Activated T-helper 1 cell treated with anti-CD3 and anti-CD28 coated beads, Interleukin-12 subunit alpha, Interleukin-12 subunit beta, Interleukin-2, Interleukin-4 antibody, amounts not matched to agents 30 ng/mL and 10 ng/mL and 1 ng/mL, durations not matched to agents 14 hours and 24 hours and 36 hours (primary cell): ENCODE measurements at regions of chr9 and their contacts with region 1.

Region 1: DNA sequence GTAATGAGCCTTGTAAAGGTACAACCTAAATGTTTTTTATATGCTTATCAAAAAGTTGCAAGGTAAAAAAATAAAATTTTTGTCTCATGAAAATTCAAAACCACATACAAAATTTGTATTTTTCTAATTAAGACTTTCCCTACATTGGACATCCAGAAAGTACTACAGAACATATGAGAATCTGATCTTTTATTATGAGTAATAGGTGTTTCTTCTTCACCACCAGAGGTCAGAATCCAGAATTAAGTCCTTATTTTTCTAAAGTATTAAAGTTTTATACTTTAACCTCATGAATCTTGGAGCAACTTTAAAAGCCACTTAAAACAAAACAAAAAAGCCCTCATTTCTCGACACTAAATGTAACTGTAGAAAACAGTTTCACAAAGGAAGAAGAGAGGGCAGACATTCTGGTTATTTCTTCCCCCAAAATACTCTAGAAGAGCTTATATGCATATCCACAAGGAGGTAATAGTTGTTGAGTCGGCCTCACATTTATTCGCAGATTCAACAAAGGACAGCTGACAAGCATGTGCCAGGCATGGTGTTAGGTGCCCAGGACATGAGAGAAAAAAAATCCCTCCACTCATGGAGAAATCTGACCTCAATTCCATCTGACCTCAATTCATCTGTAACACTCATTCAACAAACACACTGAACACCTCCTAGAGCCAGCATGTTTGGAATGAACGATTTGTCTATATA is 69.3 kb downstream of the MLLT3 start:
- DNase-seq: peak; percentile 1
- H3K4me3 Mint-ChIP-seq: peak overlapping the region; percentile 59
- H3K27ac Mint-ChIP-seq: peak overlapping the region; percentile 64
- H3K4me1 Mint-ChIP-seq: peaks cover 76% of the 10 kb centered on the region
- H3K27me3 Mint-ChIP-seq: no peaks in the 10 kb centered on the region

Region 2: DNA sequence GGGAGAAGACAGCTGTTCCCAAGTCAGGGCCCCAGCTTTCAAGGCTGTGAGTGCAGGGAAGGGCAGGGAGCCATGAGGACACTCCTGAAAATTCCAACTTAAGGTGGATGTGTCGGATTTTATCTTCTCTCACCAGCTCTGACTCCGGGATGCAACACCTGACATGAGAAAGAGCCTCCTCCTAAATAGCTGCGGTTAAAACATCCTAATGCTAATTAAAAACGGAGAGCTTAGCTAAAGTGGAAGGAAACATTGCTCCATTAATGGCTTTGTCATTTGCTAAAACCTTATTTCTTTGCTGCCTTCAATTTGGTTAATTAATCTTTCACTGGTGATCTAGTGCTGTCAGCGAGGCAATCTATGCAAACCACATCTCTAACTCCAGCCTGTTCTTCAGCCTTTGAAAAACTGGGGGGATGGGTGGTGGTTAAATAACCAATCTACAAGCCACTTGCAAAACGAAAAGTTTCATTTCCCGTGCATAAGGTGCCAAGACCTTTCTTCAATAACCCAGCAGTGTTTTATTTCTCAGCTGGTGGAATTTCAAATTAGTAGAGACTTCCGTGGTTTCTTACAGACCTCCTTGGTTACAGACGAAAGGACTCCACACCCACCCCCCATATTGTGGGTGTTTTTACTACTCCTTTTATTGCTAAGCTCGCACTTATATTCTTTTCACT is 310.4 kb before region 1 on chr9:
- intact Hi-C with region 1: loop called (anchors 5 kb)
- DNase-seq: peak; percentile 36
- H3K4me3 Mint-ChIP-seq: peak overlapping the region; percentile 36
- H3K27ac Mint-ChIP-seq: peak overlapping the region; percentile 27
- H3K4me1 Mint-ChIP-seq: peaks cover 65% of the 10 kb centered on the region
- H3K27me3 Mint-ChIP-seq: peaks cover 2% of the 10 kb centered on the region

Region 3: GRCh38 chr9:20508242-20508641 is 44.8 kb before region 1 on chr9:
- intact Hi-C with region 1: loop called (anchors 1 kb)
- DNase-seq: peak; percentile 30
- H3K4me3 Mint-ChIP-seq: peak overlapping the region; percentile 13
- H3K27ac Mint-ChIP-seq: peak overlapping the region; percentile 5
- H3K4me1 Mint-ChIP-seq: peaks cover 77% of the 10 kb centered on the region
- H3K27me3 Mint-ChIP-seq: no peaks in the 10 kb centered on the region

Region 4: DNA sequence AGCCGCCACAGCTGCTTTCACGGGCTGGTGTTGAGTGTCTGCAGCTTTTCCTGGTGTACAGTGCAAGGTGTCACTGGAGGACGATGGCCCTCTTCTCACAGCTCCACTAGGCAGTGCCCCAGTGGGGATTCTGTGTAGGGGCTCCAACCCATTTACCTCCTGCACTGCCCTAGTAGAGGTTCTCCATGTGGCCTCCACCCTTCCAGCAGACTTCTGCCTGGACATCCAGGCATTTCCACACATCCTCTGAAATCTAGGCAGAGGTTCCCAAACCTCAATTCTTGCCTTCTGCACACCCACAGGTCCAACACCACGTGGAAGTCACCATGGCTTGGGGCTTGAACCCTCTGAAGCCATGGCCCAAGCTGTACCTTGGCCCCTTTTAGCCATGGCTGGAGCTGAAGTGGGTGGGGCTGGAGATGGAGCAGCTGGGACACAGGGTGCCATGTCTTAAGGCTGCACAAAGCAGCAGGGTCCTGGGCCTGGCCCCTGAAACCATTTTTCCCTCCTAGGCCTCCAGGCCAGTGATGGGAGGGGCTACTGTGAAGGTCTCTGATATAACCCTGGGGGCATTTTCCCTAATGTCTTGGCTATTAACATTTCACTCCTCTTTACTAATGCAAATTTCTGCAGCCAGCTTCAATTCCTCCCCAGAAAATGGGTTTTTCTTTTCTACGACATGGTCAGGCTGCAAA is 12.7 kb before region 1 on chr9:
- intact Hi-C with region 1: loop called (anchors 1 kb)
- DNase-seq: no peak
- H3K4me3 Mint-ChIP-seq: no peak overlapping the region
- H3K27ac Mint-ChIP-seq: no peak overlapping the region
- H3K4me1 Mint-ChIP-seq: peaks cover 62% of the 10 kb centered on the region
- H3K27me3 Mint-ChIP-seq: no peaks in the 10 kb centered on the region